ENCODE measurements at regions of chr11 and their contacts with region 1.

Region 1: GRCh38 chr11:61429691-61430582 is at the starts of genes CPSF7 and SDHAF2:
- DNase-seq: peak; percentile 52
- H3K4me3 ChIP-seq: peak within 1 kb of the TSS; percentile 75
- H3K27me3 ChIP-seq: no peaks in the 10 kb centered on the region
- CTCF ChIP-seq: no peak
- polyA plus RNA-seq, gene CPSF7: 35.4 and 36.2 TPM in 2 replicates
- polyA plus RNA-seq, gene SDHAF2: 67.7 and 81.1 TPM in 2 replicates

Region 2: DNA sequence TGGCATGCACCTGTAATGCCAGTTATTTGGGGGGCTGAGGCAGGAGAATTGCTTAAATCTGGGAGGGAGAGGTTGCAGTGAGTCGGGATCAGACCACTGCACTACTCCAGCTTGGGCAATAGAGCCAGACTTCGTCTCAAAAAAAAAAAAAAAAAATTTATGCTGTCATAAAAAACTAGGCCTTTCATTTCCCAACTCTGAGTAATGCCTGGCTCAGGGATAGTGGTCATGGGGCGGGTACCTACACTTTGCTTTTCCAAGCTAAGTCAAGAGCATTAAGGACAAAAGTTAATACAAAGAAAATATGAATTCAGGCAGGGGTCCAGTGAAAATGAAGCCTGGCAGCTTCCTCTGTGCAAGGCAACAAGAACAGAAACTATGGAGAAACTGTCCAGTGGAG is 16.4 kb before region 1 on chr11:
- CTCF ChIA-PET with region 1: interaction called, 3 read pairs
- POLR2A ChIA-PET with region 1: interaction called, 11 read pairs
- DNase-seq: no peak
- H3K4me3 ChIP-seq: no peak overlapping the region
- H3K27me3 ChIP-seq: no peaks in the 10 kb centered on the region
- CTCF ChIP-seq: no peak